ENCODE measurements at regions of chrX and their contacts with region 1.

Region 1: DNA sequence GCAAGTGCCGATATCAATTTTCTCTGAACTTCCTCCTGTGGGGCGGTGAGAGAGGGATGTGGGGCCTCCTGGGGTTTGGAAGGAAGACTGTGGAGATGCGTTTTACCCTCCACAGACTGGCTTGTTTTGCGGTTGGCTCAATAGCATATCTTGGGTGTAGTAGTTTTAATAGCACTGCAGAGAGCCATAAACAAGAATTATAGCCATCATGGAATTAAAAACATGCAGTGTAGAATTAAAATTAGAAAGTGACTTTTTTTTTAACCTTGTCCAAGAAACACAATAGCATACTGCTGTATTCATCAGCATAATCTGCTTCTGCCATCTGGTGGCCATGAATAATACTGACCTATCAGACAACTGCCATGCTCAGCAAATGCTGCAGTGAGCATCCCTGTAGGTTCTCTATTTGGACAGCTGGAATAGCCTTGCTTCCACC is 47.3 kb upstream of the SCML1 start:
- DNase-seq: peak; percentile 72
- ATAC-seq: peak; percentile 94
- H3K4me3 ChIP-seq: no peak overlapping the region
- H3K27ac ChIP-seq: no peak overlapping the region
- H3K4me1 ChIP-seq: no peaks in the 10 kb centered on the region
- H3K27me3 ChIP-seq: no peaks in the 10 kb centered on the region; the same call in 1 of the 2 replicates
- CTCF ChIP-seq: peak; percentile 80
- POLR2A ChIP-seq: no peak
- RAD21 ChIP-seq: peak; percentile 88

Region 2: DNA sequence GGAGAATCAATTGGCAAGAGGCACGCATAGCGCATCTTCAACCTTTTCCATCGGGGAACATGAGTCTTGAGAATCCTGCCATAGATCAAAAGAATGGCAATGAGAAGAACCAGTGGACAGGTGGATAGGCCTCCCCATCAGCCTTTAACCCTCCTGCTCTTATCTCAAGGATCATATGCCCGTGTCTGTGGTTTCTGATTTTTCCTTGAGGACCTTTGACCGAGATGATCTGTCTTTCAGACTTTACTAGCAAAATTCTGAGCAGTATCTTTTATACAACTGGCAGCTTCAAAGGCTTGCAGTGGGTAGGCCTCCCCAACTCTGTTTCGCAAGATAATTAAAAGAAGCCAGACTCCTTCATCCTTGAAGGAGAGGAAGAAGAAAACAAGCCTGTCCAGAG is 569.2 kb before region 1 on chrX:
- CTCF ChIA-PET with region 1: interaction called, 3 read pairs
- POLR2A ChIA-PET with region 1: no interaction called
- dilution Hi-C with region 1: no loop called
- in situ Hi-C with region 1: no loop called
- intact Hi-C with region 1: loop called (anchors 2 kb)
- DNase-seq: no peak
- ATAC-seq: no peak
- H3K4me3 ChIP-seq: no peak overlapping the region
- H3K27ac ChIP-seq: no peak overlapping the region
- H3K4me1 ChIP-seq: no peaks in the 10 kb centered on the region
- H3K27me3 ChIP-seq: peaks cover 1% of the 10 kb centered on the region; the same call in 1 of the 2 replicates
- CTCF ChIP-seq: no peak
- POLR2A ChIP-seq: no peak
- RAD21 ChIP-seq: no peak

Region 3: GRCh38 chrX:17242470-17242869 is 447.5 kb before region 1 on chrX:
- CTCF ChIA-PET with region 1: interaction called, 3 read pairs
- POLR2A ChIA-PET with region 1: no interaction called
- dilution Hi-C with region 1: no loop called
- in situ Hi-C with region 1: loop called (anchors 10 kb)
- intact Hi-C with region 1: loop called (anchors 1 kb)
- DNase-seq: peak; percentile 55
- ATAC-seq: peak; percentile 88
- H3K4me3 ChIP-seq: no peak overlapping the region
- H3K27ac ChIP-seq: no peak overlapping the region
- H3K4me1 ChIP-seq: no peaks in the 10 kb centered on the region
- H3K27me3 ChIP-seq: peaks cover 6% of the 10 kb centered on the region
- CTCF ChIP-seq: peak; percentile 76
- POLR2A ChIP-seq: no peak
- RAD21 ChIP-seq: peak; percentile 70

Region 4: DNA sequence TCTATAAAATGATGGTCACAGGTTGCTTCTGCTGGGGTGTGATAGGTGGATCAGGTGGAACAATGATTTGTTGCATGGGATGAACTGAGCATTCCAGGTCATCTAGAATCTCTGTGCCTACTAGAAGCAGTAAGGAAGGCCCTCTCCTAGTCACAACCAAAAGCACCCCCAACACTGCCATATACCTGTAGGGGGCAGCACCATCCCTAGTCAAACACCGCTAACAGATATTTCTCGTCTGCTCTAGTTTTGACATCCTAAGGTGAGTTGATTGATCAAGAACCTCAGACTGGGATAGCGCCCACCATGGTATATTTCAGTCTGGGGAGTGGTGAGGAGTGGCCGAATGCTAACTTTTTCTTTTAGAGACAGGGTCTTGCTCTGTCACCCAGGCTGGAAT is 154.8 kb before region 1 on chrX:
- CTCF ChIA-PET with region 1: interaction called, 4 read pairs
- POLR2A ChIA-PET with region 1: no interaction called
- dilution Hi-C with region 1: no loop called
- in situ Hi-C with region 1: no loop called
- intact Hi-C with region 1: loop called (anchors 2 kb)
- DNase-seq: peak; percentile 20
- ATAC-seq: no peak; the same call in 1 of the 2 replicates
- H3K4me3 ChIP-seq: no peak overlapping the region
- H3K27ac ChIP-seq: no peak overlapping the region
- H3K4me1 ChIP-seq: no peaks in the 10 kb centered on the region
- H3K27me3 ChIP-seq: no peaks in the 10 kb centered on the region; the same call in none of the 2 replicates
- CTCF ChIP-seq: peak; percentile 52
- POLR2A ChIP-seq: no peak
- RAD21 ChIP-seq: peak; percentile 71

Region 5: DNA sequence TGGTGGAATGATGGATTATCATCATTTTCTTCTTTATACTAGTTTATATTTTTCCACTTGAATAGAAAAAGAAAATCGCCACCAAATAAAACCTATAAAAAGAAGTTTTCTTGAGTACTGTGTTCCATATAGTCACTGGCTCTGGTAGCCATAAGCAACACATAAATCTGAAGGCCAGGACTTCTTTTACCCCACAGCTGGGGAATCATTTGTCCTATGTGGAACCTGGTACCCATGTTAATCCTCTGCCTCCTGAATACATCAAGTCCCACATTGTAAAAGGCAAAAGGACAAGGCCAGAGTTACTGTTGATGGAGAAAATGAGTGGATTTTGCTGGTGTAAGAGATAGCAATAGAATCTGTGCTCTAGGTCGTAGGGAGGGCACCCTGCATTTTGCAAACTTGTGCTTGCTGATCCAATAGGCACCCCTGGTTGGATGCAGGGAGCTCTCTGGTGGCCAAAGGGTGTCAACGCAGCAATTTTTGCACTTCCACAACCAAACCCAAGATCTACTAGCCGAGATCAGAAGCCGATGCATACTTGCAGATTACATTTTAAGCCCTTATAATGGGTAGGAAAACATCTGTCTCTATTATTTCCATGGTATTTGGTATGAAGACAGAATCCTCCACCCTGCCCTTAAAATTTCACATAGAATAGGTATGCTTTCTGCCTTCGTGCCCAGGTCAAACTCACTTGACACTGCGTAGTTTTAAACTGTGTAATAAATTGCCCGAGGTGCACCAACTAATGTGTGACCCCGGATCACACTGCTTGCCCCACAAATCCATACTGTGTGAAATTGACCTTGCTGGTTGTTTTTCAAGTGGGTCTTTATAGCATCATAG is 98.9 kb before region 1 on chrX:
- CTCF ChIA-PET with region 1: no interaction called
- POLR2A ChIA-PET with region 1: no interaction called
- dilution Hi-C with region 1: no loop called
- in situ Hi-C with region 1: no loop called
- intact Hi-C with region 1: loop called (anchors 1 kb)
- DNase-seq: peak; percentile 80
- ATAC-seq: peak; percentile 87
- H3K4me3 ChIP-seq: no peak overlapping the region
- H3K27ac ChIP-seq: peak overlapping the region; percentile 33; the same call in 1 of the 2 replicates
- H3K4me1 ChIP-seq: peaks cover 5% of the 10 kb centered on the region
- H3K27me3 ChIP-seq: no peaks in the 10 kb centered on the region
- CTCF ChIP-seq: peak; percentile 80
- POLR2A ChIP-seq: no peak
- RAD21 ChIP-seq: peak; percentile 83

Measured in IMR-90 (cell line).